Panc1 (cell line): ENCODE measurements at regions of chr19 and their contacts with region 1.

Region 1: DNA sequence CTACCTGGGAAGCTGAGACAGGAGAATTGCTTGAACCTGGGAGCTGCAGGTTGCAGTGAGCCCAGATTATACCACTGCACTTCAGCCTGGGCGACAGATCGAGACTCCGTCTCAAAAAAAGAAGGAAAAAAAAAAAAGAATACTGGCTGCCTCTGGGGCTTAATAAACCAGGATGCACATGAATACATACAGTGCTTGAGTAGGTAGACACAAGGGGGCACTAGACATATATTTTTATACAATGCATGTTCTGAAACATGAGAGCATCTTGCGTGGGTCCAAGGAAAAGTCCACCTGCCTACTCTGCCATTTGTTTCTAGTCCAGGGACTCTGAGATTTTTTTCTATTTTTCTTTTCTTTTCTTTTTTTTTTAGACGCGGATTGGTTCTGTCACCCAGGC is 31.2 kb downstream of the KEAP1 start:
- DNase-seq: no peak
- ATAC-seq: no peak
- H3K4me3 ChIP-seq: no peak overlapping the region
- H3K27ac ChIP-seq: no peak overlapping the region
- H3K4me1 ChIP-seq: no peaks in the 10 kb centered on the region
- H3K27me3 ChIP-seq: no peaks in the 10 kb centered on the region
- CTCF ChIP-seq: no peak; the same call in 1 of the 2 replicates

Region 2: GRCh38 chr19:10194500-10195289 is 277.2 kb before region 1 on chr19 and contains the start of gene DNMT1:
- CTCF ChIA-PET with region 1: no interaction called
- POLR2A ChIA-PET with region 1: interaction called, 10 read pairs
- in situ Hi-C with region 1: no loop called
- intact Hi-C with region 1: no loop called
- DNase-seq: peak; percentile 79
- ATAC-seq: peak; percentile 97
- H3K4me3 ChIP-seq: peak within 1 kb of the TSS; percentile 82 to 91
- H3K27ac ChIP-seq: peak within 1 kb of the TSS; percentile 94
- H3K4me1 ChIP-seq: peaks cover 21% of the 10 kb centered on the region; the same call in 1 of the 2 replicates
- H3K27me3 ChIP-seq: no peaks in the 10 kb centered on the region
- CTCF ChIP-seq: no peak
- total RNA-seq, gene DNMT1: 168 TPM

Region 3: GRCh38 chr19:10461047-10461790 is 10.7 kb before region 1 on chr19:
- CTCF ChIA-PET with region 1: interaction called, 10 read pairs
- POLR2A ChIA-PET with region 1: no interaction called
- in situ Hi-C with region 1: no loop called
- intact Hi-C with region 1: no loop called
- DNase-seq: no peak
- ATAC-seq: peak; percentile 84
- H3K4me3 ChIP-seq: no peak overlapping the region; a peak in 1 of 4 replicates
- H3K27ac ChIP-seq: no peak overlapping the region
- H3K4me1 ChIP-seq: no peaks in the 10 kb centered on the region
- H3K27me3 ChIP-seq: no peaks in the 10 kb centered on the region
- CTCF ChIP-seq: no peak